ENCODE measurements at regions of chr6 and their contacts with region 1.

Region 1: GRCh38 chr6:35411066-35411465 is 41.1 kb upstream of the FANCE start:
- DNase-seq: no peak
- H3K4me3 ChIP-seq: no peak overlapping the region
- H3K27ac ChIP-seq: no peak overlapping the region
- H3K4me1 ChIP-seq: peaks cover 25 to 27% of the 10 kb centered on the region in 2 donors
- H3K27me3 ChIP-seq: no peaks in the 10 kb centered on the region
- CTCF ChIP-seq: no peak
- POLR2A ChIP-seq: no peak

Region 2: DNA sequence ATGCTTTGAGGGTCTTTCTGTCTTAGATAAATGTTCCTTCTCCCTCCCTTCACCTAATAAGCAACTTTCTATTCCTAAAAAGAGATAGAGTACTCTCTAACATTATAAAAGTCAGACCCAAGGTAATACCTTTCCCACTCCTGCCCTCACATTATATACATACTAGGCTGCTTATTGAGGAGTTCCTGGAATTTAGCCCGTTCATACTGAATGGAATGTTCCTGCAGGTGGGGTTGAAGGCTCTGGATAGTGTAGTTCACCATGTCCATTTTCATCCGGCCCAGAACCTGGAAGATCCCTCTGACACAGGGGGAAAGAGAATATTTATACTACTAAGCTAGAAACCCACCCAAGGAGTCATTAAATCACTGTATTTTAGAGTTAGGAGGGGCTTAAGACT is 290.3 kb before region 1 on chr6:
- intact Hi-C with region 1: no loop called
- DNase-seq: no peak
- H3K4me3 ChIP-seq: no peak overlapping the region
- H3K27ac ChIP-seq: no peak overlapping the region
- H3K4me1 ChIP-seq: no peaks in the 10 kb centered on the region
- H3K27me3 ChIP-seq: no peaks in the 10 kb centered on the region
- CTCF ChIP-seq: no peak
- POLR2A ChIP-seq: no peak

Region 3: DNA sequence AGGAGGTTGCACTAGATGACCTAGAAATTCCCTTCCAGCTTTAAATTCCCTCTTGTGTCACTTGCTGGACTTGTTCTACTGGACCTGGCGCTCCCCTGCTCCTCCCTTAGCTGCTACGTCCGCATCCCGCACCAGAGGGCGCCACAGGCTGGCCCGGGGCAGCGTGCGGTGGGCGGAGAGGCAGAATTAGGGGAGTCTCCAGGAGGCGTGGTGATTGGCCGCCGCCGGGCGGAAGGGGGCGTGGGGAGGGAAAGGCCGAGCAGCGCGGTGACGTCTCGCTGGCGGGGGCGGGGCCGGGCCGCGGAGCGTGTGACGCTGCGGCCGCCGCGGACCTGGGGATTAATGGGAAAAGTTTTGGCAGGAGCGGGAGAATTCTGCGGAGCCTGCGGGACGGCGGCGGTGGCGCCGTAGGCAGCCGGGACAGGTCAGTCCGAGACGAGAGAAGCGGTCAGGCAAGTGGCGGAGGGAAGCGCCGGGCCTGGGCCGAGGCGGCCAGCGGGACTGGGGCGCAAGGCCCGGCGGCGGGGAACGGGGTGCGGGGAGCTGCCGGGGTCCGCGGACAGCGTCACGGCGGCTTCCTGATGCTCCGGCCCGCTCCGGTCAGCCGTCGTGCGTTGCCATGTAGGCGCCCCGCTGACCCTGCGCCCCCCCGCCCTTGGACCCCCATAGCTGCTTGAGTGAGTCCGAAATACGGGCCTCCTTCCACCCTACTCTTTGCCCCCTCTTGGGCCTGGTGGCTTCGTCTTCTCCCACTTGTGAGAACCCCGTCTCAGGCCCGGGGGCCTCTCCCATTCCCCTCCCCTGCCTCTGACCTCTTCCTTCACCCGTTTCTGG is 68.6 kb before region 1 on chr6 and contains the start of gene PPARD:
- intact Hi-C with region 1: loop called (anchors 5 kb)
- DNase-seq: peak; percentile 98 to 99
- H3K4me3 ChIP-seq: peak within 1 kb of the TSS; percentile 78 to 95 (median 87)
- H3K27ac ChIP-seq: peak within 1 kb of the TSS; percentile 92 to 96 (median 95)
- H3K4me1 ChIP-seq: peaks cover 35 to 41% of the 10 kb centered on the region in 2 donors
- H3K27me3 ChIP-seq: no peaks in the 10 kb centered on the region
- CTCF ChIP-seq: peak; percentile 94 to 100 (median 98)
- POLR2A ChIP-seq: peak; percentile 52 to 97
- total RNA-seq, gene PPARD: 17.3 to 40.3 (median 35.9) TPM

Measured in thyroid gland (tissue), 4 donors.